GM10248 (cell line): ENCODE measurements at regions of chr4 and their contacts with region 1.

Region 1: GRCh38 chr4:15882675-15883086 is 55.9 kb downstream of the FGFBP1 start:
- DNase-seq: peak; percentile 66
- CTCF ChIP-seq: peak; percentile 85

Region 2: GRCh38 chr4:15655229-15656037 is 227.2 kb before region 1 on chr4 and contains the start of gene FBXL5:
- CTCF ChIA-PET with region 1: no interaction called
- POLR2A ChIA-PET with region 1: no interaction called
- DNase-seq: peak; percentile 96
- CTCF ChIP-seq: no peak

Region 3: DNA sequence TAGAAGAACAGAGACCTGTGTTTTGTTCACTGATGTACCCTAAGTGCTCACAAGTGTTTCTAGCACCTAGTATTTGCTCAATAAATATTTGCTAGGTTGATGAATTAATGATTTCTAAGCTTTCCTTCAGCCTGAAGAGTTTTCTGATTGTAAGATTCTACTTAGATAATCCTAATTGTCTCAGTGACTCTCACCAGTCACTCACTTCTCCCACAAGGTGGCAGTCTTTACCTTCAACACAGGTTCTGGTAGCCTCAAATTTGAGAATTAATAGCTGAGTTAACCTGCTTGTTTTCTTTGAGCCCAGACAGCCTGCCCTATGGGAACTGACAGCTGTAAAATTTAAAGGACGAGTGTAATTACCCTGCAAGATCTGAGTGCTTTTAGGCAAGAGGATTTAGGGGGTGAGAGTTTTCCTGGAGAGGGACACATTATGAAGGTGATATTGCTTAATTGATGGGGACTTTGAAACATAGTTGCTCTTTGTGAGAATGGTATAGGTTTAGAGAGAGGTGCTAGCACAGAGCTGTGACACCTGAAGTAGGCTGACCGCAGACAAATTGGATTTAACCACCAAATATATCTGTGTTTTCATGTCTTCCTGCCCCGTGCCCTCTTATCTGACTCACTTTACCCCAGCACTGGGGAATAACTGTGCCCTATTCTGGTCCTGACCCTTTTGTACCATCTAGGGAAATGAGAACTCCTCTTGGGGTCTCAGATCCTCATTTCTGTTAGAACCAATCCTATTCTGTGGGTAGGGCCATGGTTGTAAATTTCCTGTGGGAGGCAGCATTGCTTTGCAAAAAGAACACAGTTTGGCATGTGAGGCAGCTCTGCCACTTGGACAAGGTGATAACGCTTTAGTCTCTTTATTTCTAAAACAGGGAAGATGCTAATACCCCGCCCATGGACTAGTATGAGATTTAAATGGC is 76.8 kb before region 1 on chr4:
- CTCF ChIA-PET with region 1: interaction called, 51 read pairs
- POLR2A ChIA-PET with region 1: no interaction called
- DNase-seq: no peak
- CTCF ChIP-seq: peak; percentile 76

Region 4: DNA sequence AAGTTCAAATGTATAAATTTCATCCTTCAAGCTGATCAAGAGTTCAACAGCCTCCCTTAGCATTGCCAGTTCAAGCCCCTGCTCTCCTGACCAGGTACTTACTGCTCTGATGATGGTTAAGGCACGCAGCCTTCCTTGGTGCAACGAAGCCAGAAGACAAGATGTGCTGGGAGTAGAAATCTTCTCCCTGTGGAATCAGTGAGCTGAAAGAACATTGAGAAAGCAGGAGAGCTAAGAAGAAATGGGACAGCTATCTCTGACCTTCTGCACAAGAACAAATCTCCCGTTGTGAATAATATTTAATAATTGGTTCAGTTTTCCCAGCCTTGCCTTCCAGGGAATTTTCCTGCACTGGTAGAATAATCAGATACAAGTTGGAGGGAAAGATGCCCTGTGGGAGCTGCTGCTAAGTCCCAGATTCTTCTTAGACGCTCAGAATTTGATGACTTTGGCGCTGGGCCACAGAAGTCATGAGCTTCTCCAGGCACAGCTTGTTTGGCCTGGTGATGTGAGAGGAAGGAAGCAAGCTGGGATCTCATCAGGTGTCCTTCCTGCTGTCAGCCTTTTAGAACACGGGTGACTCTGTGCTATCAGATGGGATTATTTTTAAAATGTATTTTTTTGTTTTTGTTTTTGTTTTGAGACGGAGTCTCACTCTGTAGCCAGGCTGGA is 26.7 kb before region 1 on chr4:
- CTCF ChIA-PET with region 1: interaction called, 19 read pairs
- POLR2A ChIA-PET with region 1: no interaction called
- DNase-seq: no peak
- CTCF ChIP-seq: no peak

Region 5: GRCh38 chr4:15893962-15894361 is 11.3 kb after region 1 on chr4:
- CTCF ChIA-PET with region 1: interaction called, 19 read pairs
- POLR2A ChIA-PET with region 1: no interaction called
- DNase-seq: no peak
- CTCF ChIP-seq: no peak

Region 6: GRCh38 chr4:15930314-15930713 is 47.6 kb after region 1 on chr4:
- CTCF ChIA-PET with region 1: interaction called, 11 read pairs
- POLR2A ChIA-PET with region 1: no interaction called
- DNase-seq: no peak
- CTCF ChIP-seq: no peak

Region 7: DNA sequence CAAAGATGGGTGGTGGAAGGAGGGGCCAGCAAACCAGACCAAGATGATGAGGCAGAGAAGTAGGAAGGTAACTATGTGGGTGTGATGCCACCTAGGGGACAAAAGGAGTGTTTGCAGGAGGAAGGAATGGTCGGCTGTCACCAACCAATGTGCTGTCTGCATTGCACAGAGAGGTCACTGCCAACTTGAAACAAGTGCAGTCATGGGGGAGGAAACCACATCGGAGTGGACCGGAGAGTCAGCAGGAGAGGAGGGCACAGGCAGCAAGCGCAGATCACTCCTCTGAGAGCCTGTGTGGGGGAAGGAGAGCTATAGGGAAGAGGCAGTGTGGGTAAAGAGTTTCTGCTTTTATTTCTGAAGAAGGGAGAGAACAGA is 118.8 kb after region 1 on chr4:
- CTCF ChIA-PET with region 1: interaction called, 36 read pairs
- POLR2A ChIA-PET with region 1: no interaction called
- DNase-seq: peak; percentile 76
- CTCF ChIP-seq: peak; percentile 75

Region 8: DNA sequence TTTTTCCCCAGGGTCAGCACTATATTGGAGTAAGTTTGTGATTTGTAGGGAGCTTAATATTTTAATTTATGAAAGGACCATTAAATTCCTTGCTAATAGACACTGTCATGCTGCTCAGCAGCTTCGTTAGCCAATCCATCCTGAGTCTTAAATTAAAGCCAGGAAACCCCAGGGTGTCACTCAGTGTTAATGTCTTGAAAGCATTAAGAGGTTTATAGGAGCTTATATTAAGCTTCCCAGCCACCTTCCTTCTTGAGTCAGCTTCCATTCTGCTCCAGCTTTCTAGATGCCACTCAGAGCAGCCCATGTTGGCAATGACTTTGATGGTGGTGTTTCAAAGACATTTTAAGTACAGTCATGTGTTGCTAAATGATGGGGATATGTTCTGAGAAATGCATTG is 228.2 kb after region 1 on chr4:
- CTCF ChIA-PET with region 1: no interaction called
- POLR2A ChIA-PET with region 1: no interaction called
- DNase-seq: no peak
- CTCF ChIP-seq: no peak

Region 9: GRCh38 chr4:16264798-16265197 is 382.1 kb after region 1 on chr4:
- CTCF ChIA-PET with region 1: interaction called, 12 read pairs
- POLR2A ChIA-PET with region 1: no interaction called
- DNase-seq: peak; percentile 42
- CTCF ChIP-seq: peak; percentile 56

Region 10: DNA sequence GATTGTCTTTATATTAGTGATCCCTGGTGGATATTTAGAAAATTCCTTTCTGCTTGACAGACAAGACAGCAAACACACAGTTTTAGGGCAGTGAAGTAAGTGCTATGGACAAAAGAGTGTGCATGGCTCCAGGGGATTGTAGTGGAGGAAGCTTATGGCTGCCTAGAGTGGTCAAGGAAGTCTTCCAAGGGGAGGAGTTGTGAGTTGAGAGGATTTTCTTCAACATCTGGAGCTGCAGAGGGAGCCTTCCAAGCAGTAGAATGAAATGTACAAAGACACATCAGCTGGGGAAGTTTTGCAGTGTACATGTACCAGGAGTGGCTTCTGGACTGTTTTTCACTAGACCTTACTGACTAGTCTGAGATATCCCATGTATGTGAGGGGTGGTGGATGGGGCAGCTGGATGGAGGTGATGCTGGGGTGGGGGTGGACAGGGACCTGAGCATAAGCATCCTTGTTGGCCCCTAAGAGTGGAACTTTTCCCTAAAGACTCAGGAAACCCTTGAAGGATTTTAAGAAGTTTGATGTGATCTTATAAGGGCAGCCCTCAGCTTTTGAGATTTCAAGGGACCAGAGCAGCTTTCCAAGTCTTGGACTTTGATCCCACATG is 504.1 kb after region 1 on chr4:
- CTCF ChIA-PET with region 1: no interaction called
- POLR2A ChIA-PET with region 1: no interaction called
- DNase-seq: no peak
- CTCF ChIP-seq: no peak